ENCODE measurements at regions of chr3 and their contacts with region 1.

Region 1: DNA sequence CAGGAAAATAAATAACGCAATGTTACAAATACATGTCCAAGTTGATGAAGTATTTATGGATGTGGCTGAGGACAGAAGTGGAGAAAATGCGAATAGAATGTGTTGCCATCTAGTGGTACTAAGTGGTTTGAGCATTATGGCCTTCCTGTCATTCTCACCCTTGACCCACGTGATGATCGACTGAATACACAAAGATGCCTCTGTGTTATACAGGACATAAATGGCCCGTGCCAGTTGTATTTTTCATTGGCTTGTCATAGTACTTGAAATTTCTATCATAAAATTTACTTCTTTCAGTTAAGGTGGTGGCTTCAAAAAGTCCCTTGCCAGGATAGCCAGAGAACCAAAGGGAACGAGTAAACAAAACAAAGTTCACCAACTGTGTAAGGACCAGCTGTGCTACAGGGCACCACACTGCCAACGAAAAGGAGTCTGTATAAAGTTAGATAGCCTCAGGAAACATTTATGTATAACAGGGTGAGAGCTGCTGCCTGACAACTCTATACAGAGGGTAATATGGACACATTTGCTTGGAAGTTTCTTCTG is 103.7 kb downstream of the MYH15 start:
- DNase-seq: peak in 2 of 7 donors; percentile 40 to 48
- H3K4me3 ChIP-seq: no peak overlapping the region
- H3K27ac ChIP-seq: no peak overlapping the region
- H3K4me1 ChIP-seq: peaks cover 4 to 13% of the 10 kb centered on the region in 2 donors
- H3K27me3 ChIP-seq: no peaks in the 10 kb centered on the region
- CTCF ChIP-seq: peak; percentile 16 to 86 (median 62)
- POLR2A ChIP-seq: no peak

Region 2: GRCh38 chr3:107942244-107942643 is 464.5 kb before region 1 on chr3:
- intact Hi-C with region 1: loop called in 1 of 2 experiments (anchors 10 kb)
- DNase-seq: no peak
- H3K4me3 ChIP-seq: no peak overlapping the region
- H3K27ac ChIP-seq: no peak overlapping the region
- H3K4me1 ChIP-seq: no peaks in the 10 kb centered on the region
- H3K27me3 ChIP-seq: no peaks in the 10 kb centered on the region
- CTCF ChIP-seq: no peak
- POLR2A ChIP-seq: no peak

Region 3: DNA sequence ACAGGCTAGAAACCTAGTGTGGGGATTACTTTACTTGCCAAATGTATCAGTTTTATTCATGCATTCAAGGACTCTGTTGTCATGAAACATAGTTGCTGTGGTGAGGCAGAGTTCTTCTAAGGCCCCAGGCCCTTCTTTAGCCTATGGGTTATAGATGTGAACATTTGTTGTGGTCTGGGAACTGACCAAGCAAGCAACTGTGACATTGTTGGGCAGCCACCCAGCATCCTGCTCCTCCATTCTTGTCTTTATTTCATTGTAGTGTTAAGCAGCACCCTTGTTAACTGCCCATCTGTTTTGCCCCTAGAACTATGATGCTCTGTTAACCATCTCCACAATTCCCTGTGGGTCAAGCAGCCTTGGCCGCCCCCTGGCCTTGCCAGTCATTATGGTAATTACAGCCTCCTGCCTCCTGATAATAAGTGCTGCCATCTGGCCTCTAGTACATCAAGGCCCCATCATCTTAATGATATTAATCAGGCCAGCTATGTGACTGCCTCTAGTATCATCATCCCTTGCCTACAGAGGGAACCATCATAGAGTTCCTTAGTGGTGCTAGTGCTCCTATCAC is 172.3 kb before region 1 on chr3:
- intact Hi-C with region 1: no loop called
- DNase-seq: no peak
- H3K4me3 ChIP-seq: no peak overlapping the region
- H3K27ac ChIP-seq: no peak overlapping the region
- H3K4me1 ChIP-seq: no peaks in the 10 kb centered on the region
- H3K27me3 ChIP-seq: no peaks in the 10 kb centered on the region
- CTCF ChIP-seq: no peak
- POLR2A ChIP-seq: no peak